Psoas muscle (tissue), 8 donors: ENCODE measurements at regions of chr2 and their contacts with region 1.

Region 1: DNA sequence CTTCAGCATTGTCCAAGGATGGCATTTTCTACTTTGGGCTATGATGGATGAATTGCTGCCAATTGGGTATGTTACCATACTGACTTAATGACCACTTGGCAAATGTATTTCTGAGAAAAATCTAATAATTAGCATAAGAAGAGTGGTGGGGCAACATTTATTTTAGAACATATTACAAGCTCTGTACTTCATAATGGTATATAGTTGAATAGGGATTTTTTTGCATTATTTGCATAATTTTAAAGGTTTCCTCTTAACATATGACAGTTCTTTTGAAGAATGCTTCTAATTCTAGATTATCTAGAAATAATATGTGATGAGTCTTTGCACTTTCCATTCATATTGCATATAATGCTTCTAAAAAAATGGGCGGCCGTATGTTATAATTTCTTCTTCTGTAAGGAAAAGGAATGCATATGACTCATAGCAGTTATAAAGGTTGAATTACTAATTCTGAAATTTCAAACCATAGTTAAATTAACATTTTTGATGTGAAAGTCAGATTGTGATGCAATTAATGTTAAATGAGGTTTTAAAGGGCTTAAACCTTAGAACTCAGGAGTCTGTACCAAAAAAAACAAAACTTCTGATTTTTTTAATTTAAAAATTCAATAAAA is 1652.3 kb upstream of the SLC39A10 start:
- DNase-seq: no peak
- ATAC-seq: no peak
- H3K4me3 ChIP-seq: no peak overlapping the region
- H3K27ac ChIP-seq: no peak overlapping the region
- H3K4me1 ChIP-seq: no peaks in the 10 kb centered on the region
- H3K27me3 ChIP-seq: no peaks in the 10 kb centered on the region
- CTCF ChIP-seq: no peak

Region 2: GRCh38 chr2:193900292-193900691 is 104.4 kb before region 1 on chr2:
- intact Hi-C with region 1: loop called in 1 of 2 experiments (anchors 2 kb)
- DNase-seq: no peak
- ATAC-seq: no peak
- H3K4me3 ChIP-seq: no peak overlapping the region
- H3K27ac ChIP-seq: no peak overlapping the region
- H3K4me1 ChIP-seq: no peaks in the 10 kb centered on the region
- H3K27me3 ChIP-seq: no peaks in the 10 kb centered on the region
- CTCF ChIP-seq: no peak

Region 3: GRCh38 chr2:194044321-194044720 is 39.6 kb after region 1 on chr2:
- intact Hi-C with region 1: no loop called
- DNase-seq: no peak
- ATAC-seq: no peak
- H3K4me3 ChIP-seq: no peak overlapping the region
- H3K27ac ChIP-seq: no peak overlapping the region
- H3K4me1 ChIP-seq: no peaks in the 10 kb centered on the region
- H3K27me3 ChIP-seq: no peaks in the 10 kb centered on the region
- CTCF ChIP-seq: no peak